ENCODE measurements at regions of chr9 and their contacts with region 1.

Region 1: DNA sequence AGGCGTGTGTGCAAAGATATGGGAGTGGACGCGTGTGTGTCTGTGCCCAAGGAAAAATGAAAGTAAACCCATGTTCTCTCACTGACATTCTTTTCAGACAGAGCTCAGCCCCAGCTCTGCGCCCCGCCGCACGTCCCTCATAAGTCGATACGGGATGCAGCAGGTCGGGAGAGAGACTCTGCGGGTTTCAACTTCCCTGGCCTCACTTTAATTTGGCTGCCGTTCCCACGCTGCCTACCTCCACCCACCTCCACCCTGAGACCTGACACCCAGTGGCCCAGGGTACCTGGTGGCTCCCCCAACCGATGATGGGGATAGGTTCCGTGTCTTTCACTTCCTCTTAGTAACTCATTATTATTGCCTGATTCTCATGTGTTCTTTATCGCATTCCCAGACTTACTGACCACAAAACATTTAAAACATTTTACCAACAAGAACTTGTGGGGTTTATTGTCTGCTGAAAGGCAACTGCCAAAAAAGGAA is 19.4 kb downstream of the LHX2 start:
- DNase-seq: peak; percentile 76
- ATAC-seq: peak; percentile 86
- H3K4me3 ChIP-seq: no peak overlapping the region
- H3K27ac ChIP-seq: no peak overlapping the region
- H3K4me1 ChIP-seq: peaks cover 4% of the 10 kb centered on the region; the same call in 1 of the 2 replicates
- H3K27me3 ChIP-seq: peaks cover 0 to 4% of the 10 kb centered on the region in 2 experiments; a peak in 3 of 4 replicates
- CTCF ChIP-seq: no peak
- EP300 ChIP-seq: 0 out of 4 replicates have a peak, but pooled peaks of 1 of the 2 experiments have one; percentile 9
- POLR2A ChIP-seq: no peak
- RAD21 ChIP-seq: no peak

Region 2: DNA sequence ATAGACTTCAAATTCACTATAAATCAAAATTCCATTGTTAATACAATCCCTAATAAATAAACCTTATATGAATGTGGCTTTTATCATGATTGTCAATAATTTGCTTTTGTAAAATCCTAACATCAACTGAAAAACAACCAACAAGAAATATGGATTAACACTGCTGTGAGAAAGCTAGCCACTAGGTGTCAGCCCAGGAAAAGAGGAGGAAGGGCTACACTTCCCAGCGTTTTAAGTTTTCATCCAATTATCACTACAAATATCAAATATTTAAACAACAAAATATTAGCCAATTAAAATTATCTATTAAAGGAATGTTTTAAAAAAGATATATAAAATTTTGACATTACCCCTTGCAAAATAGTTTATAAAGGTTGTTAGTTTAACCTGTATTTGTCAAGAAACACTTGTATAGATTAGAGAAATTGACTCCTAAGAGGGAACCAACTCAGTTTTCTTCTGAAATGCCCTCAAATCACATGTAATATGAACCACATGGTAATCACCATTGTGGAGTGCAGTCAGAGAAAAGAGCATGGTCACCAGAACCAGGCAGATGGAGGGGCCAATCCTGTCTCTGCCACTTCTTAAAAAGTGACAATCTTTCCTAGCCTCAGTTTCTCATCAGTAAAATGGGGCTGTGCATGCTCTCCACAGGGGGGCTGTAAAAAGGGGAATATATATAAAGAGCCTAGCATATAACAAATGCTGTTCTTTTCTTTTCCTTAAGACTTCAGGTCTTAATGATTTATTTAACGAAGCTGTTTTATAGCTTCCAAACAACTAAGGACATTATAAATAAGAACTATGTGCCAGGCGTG is 486.8 kb before region 1 on chr9:
- CTCF ChIA-PET with region 1: no interaction called
- POLR2A ChIA-PET with region 1: no interaction called
- RAD21 ChIA-PET with region 1: no interaction called
- SMC1A ChIA-PET with region 1: no interaction called
- in situ Hi-C with region 1: loop called (anchors 5 kb)
- intact Hi-C with region 1: no loop called
- DNase-seq: no peak
- ATAC-seq: peak; percentile 65
- H3K4me3 ChIP-seq: no peak overlapping the region
- H3K27ac ChIP-seq: no peak overlapping the region
- H3K4me1 ChIP-seq: no peaks in the 10 kb centered on the region
- H3K27me3 ChIP-seq: no peaks in the 10 kb centered on the region
- CTCF ChIP-seq: peak; percentile 68 to 89 (median 81)
- EP300 ChIP-seq: no peak
- POLR2A ChIP-seq: no peak
- RAD21 ChIP-seq: peak; percentile 98

Region 3: DNA sequence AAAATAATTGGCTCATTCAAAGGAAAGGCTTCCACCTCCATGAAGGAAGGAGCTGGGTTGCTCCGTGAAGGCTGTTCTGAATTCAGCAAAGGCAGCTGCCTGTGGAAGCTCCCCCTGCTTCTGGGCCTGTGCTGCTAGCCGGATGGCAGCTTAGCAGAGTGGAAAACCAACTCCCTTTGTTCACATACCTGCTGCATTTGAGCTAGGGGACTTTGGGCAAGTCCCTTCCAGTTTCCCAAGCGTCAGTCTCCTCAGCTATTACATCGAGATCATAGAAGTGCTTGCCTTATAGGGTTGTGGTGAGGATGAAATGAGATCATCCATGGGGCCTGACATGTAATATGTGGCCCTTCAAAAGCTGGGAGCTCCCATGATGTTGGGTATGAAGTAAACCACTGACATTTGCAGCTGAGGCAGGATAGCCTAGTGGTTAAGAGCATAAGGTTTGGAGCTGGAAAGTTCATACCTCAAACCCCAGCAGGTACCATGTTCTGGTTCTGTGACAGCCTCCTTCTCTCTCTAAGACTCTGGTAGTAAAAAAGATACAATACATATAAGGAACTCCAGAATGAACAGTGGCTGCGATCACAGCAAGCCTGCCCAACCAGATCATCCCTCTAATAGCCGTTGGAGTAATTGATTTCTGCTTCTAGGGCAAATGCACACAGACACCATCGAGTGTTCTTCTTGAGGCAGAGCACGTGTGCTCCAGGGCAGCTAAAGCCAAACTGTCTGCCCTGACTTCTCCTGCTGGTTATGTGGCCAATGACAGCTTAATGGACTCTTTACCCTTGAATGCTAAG is 90.1 kb before region 1 on chr9:
- CTCF ChIA-PET with region 1: no interaction called
- POLR2A ChIA-PET with region 1: no interaction called
- RAD21 ChIA-PET with region 1: no interaction called
- SMC1A ChIA-PET with region 1: no interaction called
- in situ Hi-C with region 1: no loop called
- intact Hi-C with region 1: no loop called
- DNase-seq: peak; percentile 77
- ATAC-seq: peak; percentile 95
- H3K4me3 ChIP-seq: no peak overlapping the region
- H3K27ac ChIP-seq: no peak overlapping the region
- H3K4me1 ChIP-seq: no peaks in the 10 kb centered on the region
- H3K27me3 ChIP-seq: no peaks in the 10 kb centered on the region
- CTCF ChIP-seq: no peak
- EP300 ChIP-seq: peak; percentile 64 to 82; a peak in 2 of 4 replicates
- POLR2A ChIP-seq: no peak
- RAD21 ChIP-seq: no peak